PC-9 (cell line): ENCODE measurements at regions of chr3 and their contacts with region 1.

Region 1: GRCh38 chr3:66372681-66373350 is 128.0 kb downstream of the LRIG1 start:
- DNase-seq: no peak
- H3K4me3 ChIP-seq: no peak overlapping the region
- H3K27ac ChIP-seq: no peak overlapping the region
- H3K4me1 ChIP-seq: no peaks in the 10 kb centered on the region
- H3K27me3 ChIP-seq: no peaks in the 10 kb centered on the region
- CTCF ChIP-seq: no peak

Region 2: GRCh38 chr3:65508750-65509422 is 863.9 kb before region 1 on chr3:
- CTCF ChIA-PET with region 1: no interaction called
- POLR2A ChIA-PET with region 1: no interaction called
- intact Hi-C with region 1: no loop called
- DNase-seq: no peak
- H3K4me3 ChIP-seq: no peak overlapping the region
- H3K27ac ChIP-seq: no peak overlapping the region
- H3K4me1 ChIP-seq: peaks cover 5% of the 10 kb centered on the region
- H3K27me3 ChIP-seq: no peaks in the 10 kb centered on the region
- CTCF ChIP-seq: no peak

Region 3: DNA sequence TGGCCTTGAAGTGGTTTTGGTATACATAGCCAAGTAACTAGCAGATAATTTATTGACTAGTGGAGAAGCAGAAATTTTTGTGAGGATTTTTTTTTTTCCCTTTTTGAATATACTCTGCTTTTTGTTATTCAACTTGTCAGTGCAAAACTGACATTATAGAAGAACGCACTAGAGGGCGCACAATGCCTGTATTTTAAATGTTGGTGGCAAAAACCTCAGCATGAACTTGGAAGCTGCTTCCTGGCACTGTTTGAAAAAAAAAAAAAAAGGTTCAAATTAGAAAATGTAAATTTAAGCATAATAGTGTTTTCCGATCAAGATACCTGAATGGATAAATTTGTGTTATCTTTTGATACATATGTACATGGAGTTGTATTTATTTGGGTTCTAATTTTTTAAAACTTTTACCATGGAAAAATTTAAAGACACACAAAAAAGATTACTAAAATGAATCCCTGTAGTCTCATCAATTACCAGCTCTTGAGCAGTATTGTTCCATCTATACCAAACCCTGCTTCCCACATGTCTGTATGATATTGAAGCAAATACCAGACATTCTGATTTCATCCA is 96.0 kb before region 1 on chr3:
- CTCF ChIA-PET with region 1: no interaction called
- POLR2A ChIA-PET with region 1: no interaction called
- intact Hi-C with region 1: loop called (anchors 5 kb)
- DNase-seq: peak; percentile 34 to 43
- H3K4me3 ChIP-seq: no peak overlapping the region
- H3K27ac ChIP-seq: no peak overlapping the region
- H3K4me1 ChIP-seq: no peaks in the 10 kb centered on the region
- H3K27me3 ChIP-seq: no peaks in the 10 kb centered on the region
- CTCF ChIP-seq: peak; percentile 71